CD14-positive monocyte (primary cell): ENCODE measurements at regions of chr10 and their contacts with region 1.

Region 1: GRCh38 chr10:14500172-14500765 is 169.5 kb upstream of the FRMD4A start:
- DNase-seq: peak in 2 of 3 donors; percentile 3
- H3K4me3 ChIP-seq: no peak overlapping the region
- H3K4me3 Mint-ChIP-seq: no peak overlapping the region
- H3K27ac ChIP-seq: no peak overlapping the region
- H3K27ac Mint-ChIP-seq: peak overlapping the region in 3 of 7 donors; percentile 37 to 65 (median 63)
- H3K4me1 ChIP-seq: peaks cover 3 to 14% of the 10 kb centered on the region in 2 donors
- H3K4me1 Mint-ChIP-seq: peaks cover 19% of the 10 kb centered on the region
- H3K27me3 ChIP-seq: no peaks in the 10 kb centered on the region
- H3K27me3 Mint-ChIP-seq: peaks cover 7 to 8% (median 8%) of the 10 kb centered on the region in 3 donors
- CTCF ChIP-seq: no peak

Region 2: GRCh38 chr10:14439451-14440259 is 60.6 kb before region 1 on chr10:
- intact Hi-C with region 1: no loop called
- DNase-seq: no peak
- H3K4me3 ChIP-seq: no peak overlapping the region
- H3K4me3 Mint-ChIP-seq: no peak overlapping the region
- H3K27ac ChIP-seq: no peak overlapping the region
- H3K27ac Mint-ChIP-seq: no peak overlapping the region
- H3K4me1 ChIP-seq: no peaks in the 10 kb centered on the region
- H3K4me1 Mint-ChIP-seq: no peaks in the 10 kb centered on the region
- H3K27me3 ChIP-seq: no peaks in the 10 kb centered on the region
- H3K27me3 Mint-ChIP-seq: peaks cover 0 to 22% (median 6%) of the 10 kb centered on the region in 3 donors
- CTCF ChIP-seq: no peak

Region 3: GRCh38 chr10:14547816-14548215 is 47.5 kb after region 1 on chr10:
- intact Hi-C with region 1: loop called in 1 of 2 experiments (anchors 5 kb)
- DNase-seq: no peak
- H3K4me3 ChIP-seq: no peak overlapping the region
- H3K4me3 Mint-ChIP-seq: no peak overlapping the region
- H3K27ac ChIP-seq: no peak overlapping the region
- H3K27ac Mint-ChIP-seq: peak overlapping the region in 2 of 7 donors; percentile 25 to 37
- H3K4me1 ChIP-seq: peaks cover 63 to 84% of the 10 kb centered on the region in 2 donors
- H3K4me1 Mint-ChIP-seq: peaks cover 80% of the 10 kb centered on the region
- H3K27me3 ChIP-seq: no peaks in the 10 kb centered on the region
- H3K27me3 Mint-ChIP-seq: peaks cover 0 to 3% (median 1%) of the 10 kb centered on the region in 3 donors
- CTCF ChIP-seq: no peak